Natural killer cell (primary cell): ENCODE measurements at regions of chr3 and their contacts with region 1.

Region 1: GRCh38 chr3:187828579-187829452 is 83.5 kb upstream of the BCL6 start:
- DNase-seq: peak; percentile 37 to 49
- ATAC-seq: peak; percentile 81 to 87 (median 86)
- H3K4me3 ChIP-seq: no peak overlapping the region
- H3K4me3 Mint-ChIP-seq: peak overlapping the region; percentile 14
- H3K27ac ChIP-seq: peak overlapping the region; percentile 22
- H3K27ac Mint-ChIP-seq: peak overlapping the region; percentile 75 to 91
- H3K4me1 ChIP-seq: peaks cover 29% of the 10 kb centered on the region
- H3K4me1 Mint-ChIP-seq: peaks cover 39 to 46% of the 10 kb centered on the region in 2 donors
- H3K27me3 ChIP-seq: no peaks in the 10 kb centered on the region
- H3K27me3 Mint-ChIP-seq: peaks cover 0 to 4% of the 10 kb centered on the region in 2 donors
- CTCF ChIP-seq: no peak

Region 2: GRCh38 chr3:187777331-187777941 is 51.4 kb before region 1 on chr3:
- intact Hi-C with region 1: loop called (anchors 2 kb)
- DNase-seq: peak; percentile 38 to 77
- ATAC-seq: peak; percentile 82 to 91 (median 91)
- H3K4me3 ChIP-seq: no peak overlapping the region
- H3K4me3 Mint-ChIP-seq: peak overlapping the region; percentile 71
- H3K27ac ChIP-seq: peak overlapping the region; percentile 69
- H3K27ac Mint-ChIP-seq: peak overlapping the region; percentile 78 to 84
- H3K4me1 ChIP-seq: peaks cover 24% of the 10 kb centered on the region
- H3K4me1 Mint-ChIP-seq: peaks cover 27 to 30% of the 10 kb centered on the region in 2 donors
- H3K27me3 ChIP-seq: no peaks in the 10 kb centered on the region
- H3K27me3 Mint-ChIP-seq: no peaks in the 10 kb centered on the region
- CTCF ChIP-seq: no peak

Region 3: GRCh38 chr3:187994221-187995042 is 165.6 kb after region 1 on chr3:
- intact Hi-C with region 1: loop called (anchors 1 kb)
- DNase-seq: peak in 1 of 2 donors; percentile 65
- ATAC-seq: peak; percentile 87 to 92 (median 89)
- H3K4me3 ChIP-seq: no peak overlapping the region
- H3K4me3 Mint-ChIP-seq: peak overlapping the region; percentile 63
- H3K27ac ChIP-seq: peak overlapping the region; percentile 74
- H3K27ac Mint-ChIP-seq: peak overlapping the region; percentile 72 to 87
- H3K4me1 ChIP-seq: peaks cover 22% of the 10 kb centered on the region
- H3K4me1 Mint-ChIP-seq: peaks cover 61 to 66% of the 10 kb centered on the region in 2 donors
- H3K27me3 ChIP-seq: no peaks in the 10 kb centered on the region
- H3K27me3 Mint-ChIP-seq: no peaks in the 10 kb centered on the region
- CTCF ChIP-seq: no peak